Sigmoid colon (tissue), 7 donors: ENCODE measurements at regions of chr7 and their contacts with region 1.

Region 1: GRCh38 chr7:138738551-138739335 is 37.6 kb upstream of the SVOPL start:
- DNase-seq: peak; percentile 70
- H3K4me3 ChIP-seq: no peak overlapping the region
- H3K27ac ChIP-seq: no peak overlapping the region
- H3K4me1 ChIP-seq: no peaks in the 10 kb centered on the region
- H3K27me3 ChIP-seq: no peaks in the 10 kb centered on the region
- CTCF ChIP-seq: peak; percentile 17 to 72 (median 66)
- EP300 ChIP-seq: no peak
- POLR2A ChIP-seq: no peak

Region 2: DNA sequence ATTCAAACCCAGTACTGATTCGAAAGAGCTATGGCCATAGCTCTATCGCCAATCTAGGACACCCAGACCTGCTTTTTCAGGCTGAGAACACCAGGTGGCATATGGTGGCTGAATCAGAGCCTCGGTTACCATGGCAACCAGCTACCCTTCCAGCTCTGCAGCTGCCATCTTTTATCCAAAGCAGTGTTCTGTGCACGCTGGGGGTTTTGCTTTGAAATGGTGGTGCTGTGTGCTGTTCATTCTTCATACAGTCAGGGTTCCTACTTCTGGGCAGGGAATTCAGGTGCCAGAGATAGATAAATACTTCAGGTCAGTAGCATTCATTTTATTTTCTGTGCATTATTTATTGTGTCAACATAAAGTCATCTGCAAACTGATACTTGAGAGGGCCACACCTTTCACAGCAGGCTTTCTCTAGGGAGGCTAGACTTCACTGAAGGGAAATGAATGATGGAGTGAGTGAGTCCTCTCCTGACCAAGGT is 577.1 kb before region 1 on chr7:
- intact Hi-C with region 1: loop called (anchors 5 kb)
- DNase-seq: peak; percentile 70
- H3K4me3 ChIP-seq: no peak overlapping the region
- H3K27ac ChIP-seq: no peak overlapping the region
- H3K4me1 ChIP-seq: no peaks in the 10 kb centered on the region
- H3K27me3 ChIP-seq: no peaks in the 10 kb centered on the region
- CTCF ChIP-seq: peak in 1 of 4 experiments; percentile 42
- EP300 ChIP-seq: no peak
- POLR2A ChIP-seq: no peak

Region 3: GRCh38 chr7:138661236-138661635 is 77.5 kb before region 1 on chr7:
- intact Hi-C with region 1: no loop called
- DNase-seq: no peak
- H3K4me3 ChIP-seq: no peak overlapping the region
- H3K27ac ChIP-seq: no peak overlapping the region
- H3K4me1 ChIP-seq: peaks cover 0 to 7% (median 2%) of the 10 kb centered on the region in 4 donors
- H3K27me3 ChIP-seq: peaks cover 0 to 15% (median 10%) of the 10 kb centered on the region in 3 donors
- CTCF ChIP-seq: no peak
- EP300 ChIP-seq: no peak
- POLR2A ChIP-seq: no peak